Activated CD8-positive, alpha-beta T cell treated with anti-CD3 and anti-CD28 coated beads for 36 hours (primary cell): ENCODE measurements at regions of chr3 and their contacts with region 1.

Region 1: DNA sequence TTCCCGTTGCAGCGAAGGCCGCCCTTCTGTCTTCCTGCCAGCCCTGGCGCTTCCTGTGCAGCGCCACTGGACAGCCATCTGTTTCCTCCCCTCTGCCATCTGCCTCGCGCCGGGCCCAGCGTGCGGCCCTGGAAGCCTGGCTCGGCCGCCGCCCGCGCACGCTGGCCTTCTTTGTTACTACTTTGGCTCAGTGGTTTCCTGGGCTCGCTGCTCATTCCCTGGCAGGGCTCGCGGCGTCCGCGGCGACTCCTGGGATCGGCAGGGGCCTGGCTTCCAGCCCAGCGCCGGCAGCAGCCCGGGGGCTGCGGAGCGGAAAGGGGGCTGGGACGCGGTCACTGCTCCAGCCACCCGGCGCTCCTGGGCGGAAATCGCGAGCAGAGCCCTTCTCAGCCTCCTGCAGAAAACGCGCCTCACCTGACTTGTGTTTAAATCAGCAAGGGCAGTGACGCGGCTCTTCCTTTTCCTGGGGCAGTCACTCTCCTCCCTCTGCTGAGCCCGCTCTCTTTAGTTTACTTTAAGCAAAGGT is 10.0 kb downstream of the CMTM7 start:
- DNase-seq: peak; percentile 78
- ATAC-seq: peak; percentile 77
- H3K4me3 Mint-ChIP-seq: peak overlapping the region; percentile 91
- H3K27ac Mint-ChIP-seq: peak overlapping the region; percentile 100
- H3K4me1 Mint-ChIP-seq: peaks cover 71% of the 10 kb centered on the region
- H3K27me3 Mint-ChIP-seq: no peaks in the 10 kb centered on the region
- CTCF ChIP-seq: no peak

Region 2: DNA sequence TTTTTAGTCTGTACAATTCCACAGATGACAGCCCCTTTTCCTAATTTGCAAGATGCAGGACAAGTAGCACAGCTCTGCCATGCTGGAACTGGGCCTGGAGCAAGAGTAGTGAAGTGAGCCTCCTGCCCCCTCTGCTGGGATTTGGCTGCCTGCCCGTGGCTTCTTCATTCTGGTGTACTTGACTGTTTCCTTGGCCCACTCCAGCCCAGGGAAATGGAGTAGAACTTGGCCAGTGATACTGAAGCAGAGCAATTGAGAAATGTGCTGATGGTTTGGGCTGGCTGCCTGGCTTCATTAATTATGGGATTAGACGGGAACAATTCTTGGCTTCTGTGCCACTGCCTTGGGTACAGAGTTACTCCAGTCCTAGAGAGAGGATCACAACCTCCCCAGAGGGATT is 292.4 kb before region 1 on chr3:
- CTCF ChIA-PET with region 1: no interaction called
- POLR2A ChIA-PET with region 1: no interaction called
- intact Hi-C with region 1: no loop called
- DNase-seq: no peak
- ATAC-seq: no peak
- H3K4me3 Mint-ChIP-seq: no peak overlapping the region
- H3K27ac Mint-ChIP-seq: no peak overlapping the region
- H3K4me1 Mint-ChIP-seq: peaks cover 58% of the 10 kb centered on the region
- H3K27me3 Mint-ChIP-seq: no peaks in the 10 kb centered on the region
- CTCF ChIP-seq: no peak

Region 3: GRCh38 chr3:32384938-32385337 is 16.7 kb before region 1 on chr3:
- CTCF ChIA-PET with region 1: interaction called, 17 read pairs
- POLR2A ChIA-PET with region 1: interaction called, 3 read pairs
- intact Hi-C with region 1: no loop called
- DNase-seq: no peak
- ATAC-seq: no peak
- H3K4me3 Mint-ChIP-seq: no peak overlapping the region
- H3K27ac Mint-ChIP-seq: no peak overlapping the region
- H3K4me1 Mint-ChIP-seq: peaks cover 12% of the 10 kb centered on the region
- H3K27me3 Mint-ChIP-seq: no peaks in the 10 kb centered on the region
- CTCF ChIP-seq: no peak

Region 4: GRCh38 chr3:32460031-32460749 is 58.6 kb after region 1 on chr3:
- CTCF ChIA-PET with region 1: interaction called, 3 read pairs
- POLR2A ChIA-PET with region 1: interaction called, 7 read pairs
- intact Hi-C with region 1: loop called (anchors 5 kb)
- DNase-seq: peak; percentile 87
- ATAC-seq: peak; percentile 88
- H3K4me3 Mint-ChIP-seq: peak overlapping the region; percentile 69
- H3K27ac Mint-ChIP-seq: no peak overlapping the region
- H3K4me1 Mint-ChIP-seq: peaks cover 41% of the 10 kb centered on the region
- H3K27me3 Mint-ChIP-seq: no peaks in the 10 kb centered on the region
- CTCF ChIP-seq: no peak